Tibial artery (tissue), 4 donors: ENCODE measurements at regions of chr3 and their contacts with region 1.

Region 1: GRCh38 chr3:57692259-57693147 is at the start of gene DENND6A:
- DNase-seq: peak; percentile 86 to 98
- H3K4me3 ChIP-seq: peak within 1 kb of the TSS; percentile 89 to 97
- H3K27ac ChIP-seq: peak within 1 kb of the TSS; percentile 96 to 98
- H3K4me1 ChIP-seq: peaks cover 0 to 44% (median 28%) of the 10 kb centered on the region in 4 donors
- H3K27me3 ChIP-seq: no peaks in the 10 kb centered on the region
- CTCF ChIP-seq: no peak

Region 2: GRCh38 chr3:57555738-57556458 is 136.6 kb before region 1 on chr3 and contains the start of gene PDE12:
- intact Hi-C with region 1: loop called (anchors 5 kb)
- DNase-seq: peak; percentile 88 to 89
- H3K4me3 ChIP-seq: peak within 1 kb of the TSS; percentile 77 to 86
- H3K27ac ChIP-seq: peak within 1 kb of the TSS; percentile 83
- H3K4me1 ChIP-seq: peaks cover 0 to 36% (median 28%) of the 10 kb centered on the region in 4 donors
- H3K27me3 ChIP-seq: no peaks in the 10 kb centered on the region
- CTCF ChIP-seq: no peak

Region 3: DNA sequence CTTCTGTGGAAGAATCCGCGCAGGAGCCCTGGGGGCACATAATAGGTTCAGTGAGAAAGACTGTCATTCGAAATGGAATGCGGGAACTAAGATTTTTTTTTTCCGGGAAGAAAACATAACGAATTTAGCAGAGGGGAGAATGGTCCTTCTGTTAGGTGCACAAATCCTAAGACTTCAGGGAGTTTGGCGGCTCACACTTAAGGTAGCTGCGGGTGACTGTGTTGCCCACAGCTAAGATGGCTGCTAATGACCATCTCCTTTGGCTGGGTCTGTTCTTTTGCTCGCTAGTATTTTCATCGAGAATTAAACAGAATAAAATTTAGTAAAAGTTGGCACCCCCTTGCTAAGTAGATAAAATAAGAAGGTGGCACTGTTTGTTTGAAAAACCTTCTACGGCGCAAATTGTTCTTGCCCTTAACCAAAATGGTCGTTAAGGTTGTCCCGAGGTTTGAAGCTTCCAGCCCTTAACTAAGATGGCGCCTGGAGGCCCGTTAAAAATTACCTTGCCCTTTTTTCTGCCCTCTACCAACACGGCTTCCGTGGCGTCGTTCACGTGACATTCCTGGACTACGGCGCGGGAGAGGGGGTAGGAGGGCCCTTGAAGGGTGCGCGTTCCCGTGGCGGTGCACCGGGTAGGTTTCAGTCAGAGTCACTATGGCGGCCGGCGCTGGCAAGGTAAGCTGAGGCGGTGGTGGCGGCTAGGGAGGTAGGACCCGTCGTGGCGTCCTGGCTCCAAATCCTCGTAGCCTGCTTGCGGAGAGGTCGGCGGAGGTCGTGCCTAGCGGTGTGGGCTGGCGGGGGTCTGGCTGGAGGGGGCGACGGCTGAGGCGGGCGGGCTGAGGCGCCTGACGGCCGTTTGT is 63.4 kb after region 1 on chr3 and contains the start of gene SLMAP:
- intact Hi-C with region 1: loop called (anchors 5 kb)
- DNase-seq: peak; percentile 98
- H3K4me3 ChIP-seq: peak within 1 kb of the TSS; percentile 76 to 84
- H3K27ac ChIP-seq: peak within 1 kb of the TSS; percentile 87
- H3K4me1 ChIP-seq: peaks cover 0 to 45% (median 18%) of the 10 kb centered on the region in 4 donors
- H3K27me3 ChIP-seq: no peaks in the 10 kb centered on the region
- CTCF ChIP-seq: no peak